ENCODE measurements at regions of chr12 and their contacts with region 1.

Region 1: GRCh38 chr12:1650260-1650977 is 21.4 kb downstream of the WNT5B start:
- DNase-seq: no peak
- H3K4me3 ChIP-seq: no peak overlapping the region
- H3K27ac ChIP-seq: peak overlapping the region in 1 of 2 donors; percentile 47
- H3K4me1 ChIP-seq: peaks cover 0 to 12% of the 10 kb centered on the region in 2 donors
- H3K27me3 ChIP-seq: no peaks in the 10 kb centered on the region
- CTCF ChIP-seq: no peak

Region 2: GRCh38 chr12:1634590-1635191 is 15.7 kb before region 1 on chr12:
- intact Hi-C with region 1: loop called (anchors 2 kb)
- DNase-seq: peak; percentile 33 to 83
- H3K4me3 ChIP-seq: no peak overlapping the region
- H3K27ac ChIP-seq: no peak overlapping the region
- H3K4me1 ChIP-seq: no peaks in the 10 kb centered on the region
- H3K27me3 ChIP-seq: no peaks in the 10 kb centered on the region
- CTCF ChIP-seq: peak; percentile 58 to 87 (median 77)